ENCODE measurements at regions of chr5 and their contacts with region 1.

Region 1: DNA sequence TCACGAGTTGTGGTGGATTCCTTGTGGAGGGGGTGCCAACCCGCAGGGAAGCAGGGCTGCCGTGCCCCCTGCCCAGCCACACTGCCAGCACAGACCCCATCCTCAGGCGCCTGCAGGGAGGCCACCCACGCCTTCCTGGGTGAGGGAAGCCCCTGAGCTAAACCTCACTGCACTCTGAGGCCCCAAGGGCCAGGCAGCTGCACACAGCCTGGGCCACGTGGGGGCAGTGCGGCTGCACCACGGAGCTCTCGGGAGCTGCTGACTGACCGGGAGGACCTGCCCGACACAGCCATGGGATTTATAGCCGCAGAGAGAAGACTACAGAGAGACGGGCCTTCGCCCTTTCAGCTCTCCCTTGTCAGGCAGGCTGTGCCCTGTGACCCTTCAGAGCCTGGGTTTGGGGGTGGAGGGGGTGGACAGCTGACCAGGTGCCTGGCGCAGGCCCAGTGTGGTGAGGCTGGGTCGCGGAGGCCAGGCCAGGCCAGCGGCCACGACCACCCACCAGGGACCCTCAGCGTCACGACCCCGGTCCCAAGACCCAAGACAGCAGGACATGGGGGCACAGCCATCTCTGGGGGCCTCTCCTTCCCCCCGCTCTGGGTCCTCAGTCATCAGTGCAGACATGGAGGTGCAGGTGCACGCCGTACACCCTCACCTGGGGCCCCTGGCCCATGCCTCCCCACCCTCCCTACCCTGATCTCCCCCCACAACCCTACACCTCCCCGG is 4.3 kb upstream of the AHRR start:
- DNase-seq: peak in 1 of 2 experiments; percentile 89
- H3K4me3 ChIP-seq: no peak overlapping the region
- H3K27ac ChIP-seq: no peak overlapping the region
- H3K4me1 ChIP-seq: no peaks in the 10 kb centered on the region
- H3K27me3 ChIP-seq: no peaks in the 10 kb centered on the region
- CTCF ChIP-seq: peak; percentile 69

Region 2: DNA sequence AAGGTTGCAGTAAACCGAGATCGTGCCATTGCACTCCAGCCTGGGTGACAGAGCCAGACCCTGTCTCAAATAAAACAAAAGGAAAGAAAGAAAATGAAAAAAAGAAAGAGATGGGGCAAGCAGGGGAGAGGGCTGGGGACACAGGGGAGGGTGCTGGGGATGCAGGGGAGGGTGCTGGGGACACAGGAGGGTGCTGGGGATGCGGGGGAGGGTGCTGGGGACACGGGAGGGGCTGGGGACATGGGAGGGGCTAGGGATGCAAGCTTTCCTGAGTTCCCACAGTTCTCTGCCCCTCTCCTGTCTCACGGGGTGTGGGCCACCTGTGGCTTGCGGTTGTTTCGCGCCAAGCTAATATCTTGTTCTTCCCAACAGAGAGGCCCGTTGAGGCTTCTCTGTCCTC is 38.6 kb before region 1 on chr5:
- CTCF ChIA-PET with region 1: interaction called, 3 read pairs
- POLR2A ChIA-PET with region 1: interaction called, 10 read pairs
- intact Hi-C with region 1: no loop called
- DNase-seq: no peak
- H3K4me3 ChIP-seq: no peak overlapping the region
- H3K27ac ChIP-seq: no peak overlapping the region
- H3K4me1 ChIP-seq: peaks cover 4% of the 10 kb centered on the region; the same call in 1 of the 2 replicates
- H3K27me3 ChIP-seq: no peaks in the 10 kb centered on the region
- CTCF ChIP-seq: no peak

Region 3: GRCh38 chr5:424301-425110 is 107.3 kb after region 1 on chr5:
- CTCF ChIA-PET with region 1: interaction called, 6 read pairs
- POLR2A ChIA-PET with region 1: interaction called, 3 read pairs
- intact Hi-C with region 1: loop called (anchors 1 kb)
- DNase-seq: peak in 1 of 2 experiments; percentile 37
- H3K4me3 ChIP-seq: no peak overlapping the region
- H3K27ac ChIP-seq: no peak overlapping the region
- H3K4me1 ChIP-seq: no peaks in the 10 kb centered on the region
- H3K27me3 ChIP-seq: no peaks in the 10 kb centered on the region
- CTCF ChIP-seq: no peak

Region 4: DNA sequence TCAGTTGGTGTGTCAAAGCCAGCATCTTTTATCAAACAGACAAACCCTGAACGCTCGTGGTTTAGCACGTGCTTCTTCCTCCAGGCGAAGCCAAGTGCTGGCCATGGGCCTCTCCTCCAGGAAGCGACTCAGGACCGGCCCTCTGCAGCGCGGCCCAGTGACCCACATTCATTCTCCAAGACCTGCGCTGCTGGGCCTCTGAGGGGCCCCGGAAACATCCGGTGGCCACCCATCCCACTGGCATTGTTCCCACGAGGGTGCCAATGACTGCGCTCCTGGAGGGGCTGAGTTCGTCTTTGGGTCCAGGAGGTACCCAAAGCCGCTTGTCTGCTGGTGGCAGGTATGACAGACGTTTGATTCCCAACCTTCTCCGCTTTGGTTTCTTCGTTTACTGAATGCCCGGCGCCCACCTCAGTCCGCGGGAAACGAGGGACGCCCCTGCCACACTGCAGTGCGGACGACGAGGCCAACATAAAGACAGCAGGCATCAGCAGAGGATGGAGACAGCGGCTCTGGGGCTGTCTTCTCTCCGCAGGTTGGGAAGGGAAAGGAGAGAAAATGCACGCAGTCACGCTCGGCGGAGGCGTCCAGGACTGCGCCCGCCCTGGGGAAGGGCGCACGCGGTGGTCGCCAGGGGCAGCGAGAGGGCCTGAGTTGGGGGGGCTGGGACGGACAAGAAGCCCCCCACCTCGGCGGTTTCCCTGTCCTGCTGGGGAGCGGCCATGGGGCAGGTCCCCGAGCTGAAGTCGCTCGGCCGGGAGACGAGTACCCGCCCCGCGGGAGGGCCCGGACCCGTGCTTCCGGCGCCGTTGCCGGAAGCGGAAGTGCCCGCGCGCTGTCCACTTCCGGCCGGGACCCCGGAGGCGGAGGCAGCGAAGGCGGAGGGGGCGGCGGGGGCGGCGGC is 125.3 kb after region 1 on chr5 and contains the start of gene EXOC3:
- CTCF ChIA-PET with region 1: interaction called, 11 read pairs
- POLR2A ChIA-PET with region 1: no interaction called
- intact Hi-C with region 1: no loop called
- DNase-seq: peak; percentile 71 to 92
- H3K4me3 ChIP-seq: peak within 1 kb of the TSS; percentile 99
- H3K27ac ChIP-seq: peak within 1 kb of the TSS; percentile 25
- H3K4me1 ChIP-seq: peaks cover 24% of the 10 kb centered on the region
- H3K27me3 ChIP-seq: no peaks in the 10 kb centered on the region
- CTCF ChIP-seq: no peak
- total RNA-seq, gene EXOC3: 155 and 188 TPM in 2 replicates

Region 5: GRCh38 chr5:528625-529511 is 211.6 kb after region 1 on chr5:
- CTCF ChIA-PET with region 1: no interaction called
- POLR2A ChIA-PET with region 1: no interaction called
- intact Hi-C with region 1: no loop called
- DNase-seq: no peak
- H3K4me3 ChIP-seq: no peak overlapping the region
- H3K27ac ChIP-seq: no peak overlapping the region
- H3K4me1 ChIP-seq: no peaks in the 10 kb centered on the region
- H3K27me3 ChIP-seq: peaks cover 84% of the 10 kb centered on the region
- CTCF ChIP-seq: no peak

Region 6: GRCh38 chr5:1167728-1168709 is 850.8 kb after region 1 on chr5:
- CTCF ChIA-PET with region 1: no interaction called
- POLR2A ChIA-PET with region 1: no interaction called
- intact Hi-C with region 1: loop called (anchors 5 kb)
- DNase-seq: peak; percentile 62 to 87
- H3K4me3 ChIP-seq: no peak overlapping the region
- H3K27ac ChIP-seq: no peak overlapping the region
- H3K4me1 ChIP-seq: no peaks in the 10 kb centered on the region
- H3K27me3 ChIP-seq: peaks cover 42% of the 10 kb centered on the region
- CTCF ChIP-seq: peak; percentile 89

Measured in PC-9 (cell line).